GM12878 (cell line): ENCODE measurements at regions of chr16 and their contacts with region 1.

Region 1: DNA sequence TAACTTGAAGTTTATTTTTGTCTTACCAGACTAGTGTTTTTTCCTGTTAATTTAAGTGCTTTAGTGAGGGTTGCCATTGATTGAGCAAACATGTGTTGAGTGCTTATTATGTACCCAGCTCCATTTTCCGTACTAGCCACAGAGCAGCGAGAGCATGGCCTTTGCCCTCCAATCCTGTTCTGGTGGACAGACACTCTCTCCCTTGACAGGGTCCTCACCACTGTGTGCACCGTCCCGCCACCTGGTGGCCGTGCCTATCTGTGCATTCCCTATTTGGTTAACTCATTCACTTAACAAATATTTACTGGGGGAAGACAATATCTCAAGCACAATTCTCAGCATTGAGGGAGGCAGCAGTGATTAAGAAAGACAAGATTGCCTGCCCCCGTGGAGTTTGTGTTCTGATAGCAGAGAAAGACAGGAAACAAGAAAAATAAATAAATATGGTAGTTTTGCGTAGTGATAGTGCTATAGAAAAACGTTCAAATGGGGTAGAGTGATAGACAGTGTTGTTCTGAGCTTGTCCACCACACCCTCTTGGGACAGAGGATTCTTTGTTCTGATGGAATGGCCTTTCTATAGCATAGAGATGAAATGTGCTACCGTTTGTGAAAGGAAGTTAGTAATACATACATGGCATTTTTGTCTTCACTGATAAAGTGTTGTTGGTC is 13.0 kb downstream of the CDH13 start:
- DNase-seq: no peak
- ATAC-seq: peak; percentile 78
- H3K4me3 ChIP-seq: no peak overlapping the region
- H3K27ac ChIP-seq: no peak overlapping the region
- H3K4me1 ChIP-seq: 0 out of 2 replicates have a peak, but pooled peaks cover 2% of the 10 kb centered on the region
- H3K27me3 ChIP-seq: no peaks in the 10 kb centered on the region
- CTCF ChIP-seq: peak; percentile 77 to 90 (median 88)
- EP300 ChIP-seq: no peak
- POLR2A ChIP-seq: no peak
- RAD21 ChIP-seq: peak; percentile 62

Region 2: DNA sequence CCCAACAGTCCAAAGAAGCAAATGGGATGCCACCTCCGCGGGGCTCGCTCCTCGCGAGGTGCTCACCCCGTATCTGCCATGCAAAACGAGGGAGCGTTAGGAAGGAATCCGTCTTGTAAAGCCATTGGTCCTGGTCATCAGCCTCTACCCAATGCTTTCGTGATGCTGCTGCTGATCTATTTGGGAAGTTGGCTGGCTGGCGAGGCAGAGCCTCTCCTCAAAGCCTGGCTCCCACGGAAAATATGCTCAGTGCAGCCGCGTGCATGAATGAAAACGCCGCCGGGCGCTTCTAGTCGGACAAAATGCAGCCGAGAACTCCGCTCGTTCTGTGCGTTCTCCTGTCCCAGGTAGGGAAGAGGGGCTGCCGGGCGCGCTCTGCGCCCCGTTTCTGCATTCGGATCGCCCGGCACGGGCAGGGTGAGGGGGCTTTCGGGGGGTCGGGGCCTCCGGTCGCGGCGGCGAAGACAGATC is 13.0 kb before region 1 on chr16 and contains the start of gene CDH13:
- CTCF ChIA-PET with region 1: interaction called, 17 read pairs
- POLR2A ChIA-PET with region 1: no interaction called
- RAD21 ChIA-PET with region 1: interaction called, 3 read pairs
- SMC1A ChIA-PET with region 1: interaction called, 3 read pairs
- in situ Hi-C with region 1: no loop called
- intact Hi-C with region 1: no loop called
- DNase-seq: no peak
- ATAC-seq: no peak
- H3K4me3 ChIP-seq: no peak within 1 kb of the TSS
- H3K27ac ChIP-seq: no peak within 1 kb of the TSS
- H3K4me1 ChIP-seq: no peaks in the 10 kb centered on the region
- H3K27me3 ChIP-seq: peaks cover 11% of the 10 kb centered on the region in 2 experiments
- CTCF ChIP-seq: no peak
- EP300 ChIP-seq: no peak
- POLR2A ChIP-seq: no peak
- RAD21 ChIP-seq: no peak
- polyA plus RNA-seq, gene CDH13: not detected

Region 3: DNA sequence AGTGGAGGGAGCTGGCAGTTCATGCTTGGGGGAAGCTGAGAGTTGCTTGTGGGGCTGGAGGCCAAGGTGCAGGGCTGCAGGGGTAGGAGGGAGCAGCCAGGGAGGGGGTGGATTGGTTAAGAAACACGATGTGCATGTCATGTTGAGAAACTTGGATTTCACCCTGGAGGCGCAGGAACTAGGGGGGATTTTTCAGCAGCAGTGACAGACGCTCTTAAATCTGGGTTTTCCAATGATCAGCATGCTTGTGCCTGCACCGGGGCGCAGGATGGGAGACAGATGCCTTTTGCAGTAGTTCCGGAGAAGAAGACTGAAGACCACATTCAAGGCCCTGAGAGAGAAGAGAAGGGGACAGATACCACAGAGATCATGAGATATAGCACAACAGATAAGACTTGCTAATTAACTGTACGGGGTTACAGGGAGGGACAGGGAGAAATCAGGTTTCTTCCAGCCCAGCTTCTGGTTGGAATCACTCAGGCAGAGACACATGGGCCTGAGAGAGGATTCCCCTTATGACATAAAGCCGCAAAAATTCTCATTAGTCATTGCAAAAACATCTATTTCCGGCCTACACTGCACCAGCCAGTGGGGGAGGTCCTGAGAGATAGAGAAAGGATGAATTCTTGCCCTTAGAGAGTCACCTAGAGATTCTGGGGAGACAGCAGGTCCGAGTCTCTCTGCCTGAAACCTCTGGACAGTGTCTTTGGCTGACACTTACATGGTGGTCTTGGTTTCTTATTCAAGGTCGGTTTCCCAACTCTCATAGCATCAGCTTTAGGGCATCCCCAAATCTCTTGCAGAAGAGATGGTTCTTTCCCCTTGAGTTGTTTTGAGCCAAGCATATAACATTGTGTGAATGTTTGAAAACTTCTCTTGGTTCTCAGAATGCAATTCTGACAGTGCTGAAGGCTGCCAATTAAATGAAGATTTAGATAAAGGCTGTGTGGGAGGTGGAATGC is 14.0 kb after region 1 on chr16:
- CTCF ChIA-PET with region 1: interaction called, 100 read pairs
- POLR2A ChIA-PET with region 1: interaction called, 8 read pairs
- RAD21 ChIA-PET with region 1: interaction called, 11 read pairs
- SMC1A ChIA-PET with region 1: interaction called, 63 read pairs
- in situ Hi-C with region 1: no loop called
- intact Hi-C with region 1: loop called (anchors 2 kb)
- DNase-seq: peak; percentile 90
- ATAC-seq: peak; percentile 76
- H3K4me3 ChIP-seq: peak overlapping the region; percentile 20; the same call in 1 of the 2 replicates
- H3K27ac ChIP-seq: peak overlapping the region; percentile 96
- H3K4me1 ChIP-seq: peaks cover 56% of the 10 kb centered on the region
- H3K27me3 ChIP-seq: no peaks in the 10 kb centered on the region
- CTCF ChIP-seq: no peak
- EP300 ChIP-seq: peak; percentile 85 to 89
- POLR2A ChIP-seq: peak; percentile 64
- RAD21 ChIP-seq: no peak

Region 4: GRCh38 chr16:82671741-82672140 is 31.9 kb after region 1 on chr16:
- CTCF ChIA-PET with region 1: interaction called, 131 read pairs
- POLR2A ChIA-PET with region 1: no interaction called
- RAD21 ChIA-PET with region 1: no interaction called
- SMC1A ChIA-PET with region 1: interaction called, 22 read pairs
- in situ Hi-C with region 1: no loop called
- intact Hi-C with region 1: loop called (anchors 1 kb)
- DNase-seq: no peak
- ATAC-seq: peak; percentile 71
- H3K4me3 ChIP-seq: no peak overlapping the region
- H3K27ac ChIP-seq: no peak overlapping the region
- H3K4me1 ChIP-seq: no peaks in the 10 kb centered on the region
- H3K27me3 ChIP-seq: no peaks in the 10 kb centered on the region; a peak in 1 of 4 replicates
- CTCF ChIP-seq: peak; percentile 23 to 55 (median 45)
- EP300 ChIP-seq: no peak
- POLR2A ChIP-seq: no peak
- RAD21 ChIP-seq: peak; percentile 46; the same call in 1 of the 2 replicates

Region 5: GRCh38 chr16:82796047-82796446 is 156.2 kb after region 1 on chr16:
- CTCF ChIA-PET with region 1: no interaction called
- POLR2A ChIA-PET with region 1: no interaction called
- RAD21 ChIA-PET with region 1: no interaction called
- SMC1A ChIA-PET with region 1: no interaction called
- in situ Hi-C with region 1: no loop called
- intact Hi-C with region 1: loop called (anchors 10 kb)
- DNase-seq: no peak
- ATAC-seq: no peak
- H3K4me3 ChIP-seq: no peak overlapping the region
- H3K27ac ChIP-seq: no peak overlapping the region
- H3K4me1 ChIP-seq: no peaks in the 10 kb centered on the region
- H3K27me3 ChIP-seq: 0 out of 4 replicates have a peak, but pooled peaks cover 0 to 3% of the 10 kb centered on the region in 2 experiments
- CTCF ChIP-seq: peak in 2 of 3 experiments; percentile 6 to 25; a peak in 1 of 6 replicates
- EP300 ChIP-seq: no peak
- POLR2A ChIP-seq: no peak
- RAD21 ChIP-seq: peak; percentile 30; the same call in 1 of the 2 replicates

Region 6: GRCh38 chr16:83215406-83216001 is 575.7 kb after region 1 on chr16:
- CTCF ChIA-PET with region 1: interaction called, 4 read pairs
- POLR2A ChIA-PET with region 1: no interaction called
- RAD21 ChIA-PET with region 1: no interaction called
- SMC1A ChIA-PET with region 1: no interaction called
- in situ Hi-C with region 1: no loop called
- intact Hi-C with region 1: loop called (anchors 10 kb)
- DNase-seq: no peak
- ATAC-seq: peak; percentile 68
- H3K4me3 ChIP-seq: no peak overlapping the region
- H3K27ac ChIP-seq: no peak overlapping the region
- H3K4me1 ChIP-seq: no peaks in the 10 kb centered on the region
- H3K27me3 ChIP-seq: no peaks in the 10 kb centered on the region
- CTCF ChIP-seq: peak; percentile 58 to 86 (median 80)
- EP300 ChIP-seq: no peak
- POLR2A ChIP-seq: no peak
- RAD21 ChIP-seq: peak; percentile 85